ENCODE measurements at regions of chr12 and their contacts with region 1.

Region 1: DNA sequence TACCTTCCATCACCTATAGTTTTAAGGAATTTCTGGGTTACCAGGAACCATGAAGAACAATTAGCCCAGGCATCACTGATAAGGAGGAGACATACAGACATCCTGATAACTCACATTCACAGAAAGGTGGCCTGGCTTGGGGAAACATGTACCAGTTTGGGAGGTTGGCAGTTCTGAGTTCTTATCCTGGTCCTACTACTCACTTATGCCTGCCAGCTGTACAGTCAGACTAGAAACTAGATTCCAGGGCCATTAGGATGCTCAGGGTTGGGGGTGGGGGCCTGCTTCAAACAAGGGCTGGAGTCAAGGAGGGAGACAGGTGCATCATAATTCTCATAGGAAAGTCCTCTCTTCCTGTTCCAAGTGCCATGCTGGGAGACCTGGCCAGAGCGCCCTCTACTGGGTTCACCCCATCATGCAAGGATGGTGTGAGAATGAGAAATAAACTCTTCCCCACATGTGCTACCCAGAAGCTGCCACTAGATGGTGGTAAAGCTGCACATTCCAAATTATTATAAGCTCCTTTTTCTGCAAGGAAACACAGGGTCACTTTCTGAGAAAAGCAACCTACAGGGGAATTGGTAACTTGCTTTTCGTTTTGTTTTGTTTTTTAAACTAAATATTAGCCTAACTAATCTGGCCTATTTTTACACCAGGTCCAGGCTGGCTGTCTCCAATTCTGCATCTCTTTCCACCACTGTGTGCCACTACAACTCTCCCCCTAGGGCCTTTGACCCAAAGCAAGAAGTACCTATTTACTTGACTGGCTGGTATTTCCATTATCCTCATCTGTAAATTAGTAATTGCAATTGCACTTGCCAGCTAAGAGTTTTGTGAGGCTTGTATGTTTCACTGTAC is 14.5 kb downstream of the OAS2 start:
- DNase-seq: peak; percentile 54
- ATAC-seq: peak; percentile 89
- H3K4me3 ChIP-seq: no peak overlapping the region
- H3K27ac ChIP-seq: no peak overlapping the region
- H3K4me1 ChIP-seq: no peaks in the 10 kb centered on the region
- H3K27me3 ChIP-seq: peaks cover 4% of the 10 kb centered on the region
- CTCF ChIP-seq: peak; percentile 98

Region 2: DNA sequence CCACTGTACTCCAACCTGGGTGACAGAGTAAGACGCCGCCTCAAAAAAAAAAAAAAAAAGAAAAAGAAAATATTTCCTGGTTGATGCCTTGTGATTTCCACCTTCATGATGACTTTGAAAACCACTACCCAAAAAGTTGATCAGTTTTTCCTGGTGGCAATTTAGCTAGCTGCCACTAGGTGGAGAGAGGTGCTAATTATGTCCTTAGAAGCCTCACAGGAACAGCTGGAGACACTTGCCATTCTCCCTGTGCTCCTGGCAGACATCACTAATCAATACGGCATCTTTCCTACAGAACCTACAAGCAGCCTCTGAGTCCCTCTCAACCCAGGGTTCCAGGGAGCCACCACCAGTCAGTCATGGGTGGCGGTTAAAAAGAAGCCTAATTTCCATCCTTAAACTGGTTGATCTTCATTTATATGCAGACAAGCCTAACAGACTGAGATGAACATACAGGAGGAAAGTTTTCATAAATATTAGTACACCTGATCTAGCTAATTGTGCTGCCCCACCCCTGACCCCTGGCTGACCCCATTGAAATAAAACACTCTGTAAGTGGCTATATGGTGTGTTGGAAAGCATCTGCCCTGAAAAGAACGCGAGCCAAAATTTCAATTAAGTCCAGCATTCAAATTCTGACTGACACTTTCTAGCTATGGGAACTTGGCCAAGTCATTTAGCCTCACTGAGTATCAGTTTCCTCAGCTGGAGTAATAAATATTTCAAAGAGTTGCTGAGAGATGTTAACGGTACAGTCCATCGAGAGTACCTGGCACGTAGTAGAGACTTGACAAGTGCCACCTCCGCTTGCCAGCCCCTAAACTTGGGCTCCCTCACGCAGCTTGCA is 92.2 kb before region 1 on chr12:
- CTCF ChIA-PET with region 1: interaction called, 18 read pairs
- POLR2A ChIA-PET with region 1: no interaction called
- in situ Hi-C with region 1: no loop called
- intact Hi-C with region 1: no loop called
- DNase-seq: peak; percentile 30
- ATAC-seq: peak; percentile 79
- H3K4me3 ChIP-seq: no peak overlapping the region
- H3K27ac ChIP-seq: no peak overlapping the region
- H3K4me1 ChIP-seq: no peaks in the 10 kb centered on the region
- H3K27me3 ChIP-seq: no peaks in the 10 kb centered on the region
- CTCF ChIP-seq: peak; percentile 88

Region 3: GRCh38 chr12:113030875-113031525 is 38.2 kb after region 1 on chr12:
- CTCF ChIA-PET with region 1: interaction called, 30 read pairs
- POLR2A ChIA-PET with region 1: no interaction called
- in situ Hi-C with region 1: no loop called
- intact Hi-C with region 1: loop called (anchors 1 kb)
- DNase-seq: no peak
- ATAC-seq: peak; percentile 80
- H3K4me3 ChIP-seq: no peak overlapping the region
- H3K27ac ChIP-seq: no peak overlapping the region
- H3K4me1 ChIP-seq: no peaks in the 10 kb centered on the region
- H3K27me3 ChIP-seq: peaks cover 3% of the 10 kb centered on the region; the same call in 1 of the 2 replicates
- CTCF ChIP-seq: peak; percentile 82

Region 4: DNA sequence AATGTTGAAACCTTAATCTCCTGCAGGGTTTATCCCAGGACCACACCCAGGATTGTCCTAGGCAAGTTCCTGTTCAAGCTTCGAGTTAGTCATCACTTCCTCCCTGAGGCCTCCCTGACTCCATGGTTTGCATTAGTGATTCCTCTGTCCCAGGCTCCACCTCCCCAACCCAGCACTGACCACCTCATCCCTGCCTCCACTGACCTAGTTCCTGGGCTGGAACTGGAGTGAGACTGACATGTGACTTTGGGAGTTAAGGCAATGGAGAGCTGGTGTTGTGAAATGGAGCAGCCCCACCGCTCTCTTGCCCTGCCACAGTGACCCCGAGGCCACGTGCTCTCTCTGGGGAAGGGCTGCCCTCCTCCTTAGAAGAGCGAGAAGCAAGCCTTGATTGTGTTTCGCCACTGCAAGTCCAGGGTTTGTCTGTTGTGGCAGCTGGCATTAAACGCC is 48.0 kb after region 1 on chr12:
- CTCF ChIA-PET with region 1: interaction called, 10 read pairs
- POLR2A ChIA-PET with region 1: no interaction called
- in situ Hi-C with region 1: no loop called
- intact Hi-C with region 1: no loop called
- DNase-seq: no peak
- ATAC-seq: 0 out of 2 replicates have a peak, but pooled peaks have one; percentile 48
- H3K4me3 ChIP-seq: no peak overlapping the region
- H3K27ac ChIP-seq: no peak overlapping the region
- H3K4me1 ChIP-seq: no peaks in the 10 kb centered on the region
- H3K27me3 ChIP-seq: no peaks in the 10 kb centered on the region
- CTCF ChIP-seq: no peak

Region 5: GRCh38 chr12:113152835-113153814 is 160.4 kb after region 1 on chr12:
- CTCF ChIA-PET with region 1: interaction called, 9 read pairs
- POLR2A ChIA-PET with region 1: no interaction called
- in situ Hi-C with region 1: no loop called
- intact Hi-C with region 1: loop called (anchors 10 kb)
- DNase-seq: peak; percentile 47
- ATAC-seq: peak; percentile 92
- H3K4me3 ChIP-seq: peak overlapping the region; percentile 45 to 60
- H3K27ac ChIP-seq: no peak overlapping the region
- H3K4me1 ChIP-seq: peaks cover 12% of the 10 kb centered on the region; the same call in 1 of the 2 replicates
- H3K27me3 ChIP-seq: no peaks in the 10 kb centered on the region
- CTCF ChIP-seq: peak; percentile 88

Measured in Panc1 (cell line).